Posterior cingulate gyrus (tissue), 11 donors: ENCODE measurements at regions of chr14 and their contacts with region 1.

Region 1: DNA sequence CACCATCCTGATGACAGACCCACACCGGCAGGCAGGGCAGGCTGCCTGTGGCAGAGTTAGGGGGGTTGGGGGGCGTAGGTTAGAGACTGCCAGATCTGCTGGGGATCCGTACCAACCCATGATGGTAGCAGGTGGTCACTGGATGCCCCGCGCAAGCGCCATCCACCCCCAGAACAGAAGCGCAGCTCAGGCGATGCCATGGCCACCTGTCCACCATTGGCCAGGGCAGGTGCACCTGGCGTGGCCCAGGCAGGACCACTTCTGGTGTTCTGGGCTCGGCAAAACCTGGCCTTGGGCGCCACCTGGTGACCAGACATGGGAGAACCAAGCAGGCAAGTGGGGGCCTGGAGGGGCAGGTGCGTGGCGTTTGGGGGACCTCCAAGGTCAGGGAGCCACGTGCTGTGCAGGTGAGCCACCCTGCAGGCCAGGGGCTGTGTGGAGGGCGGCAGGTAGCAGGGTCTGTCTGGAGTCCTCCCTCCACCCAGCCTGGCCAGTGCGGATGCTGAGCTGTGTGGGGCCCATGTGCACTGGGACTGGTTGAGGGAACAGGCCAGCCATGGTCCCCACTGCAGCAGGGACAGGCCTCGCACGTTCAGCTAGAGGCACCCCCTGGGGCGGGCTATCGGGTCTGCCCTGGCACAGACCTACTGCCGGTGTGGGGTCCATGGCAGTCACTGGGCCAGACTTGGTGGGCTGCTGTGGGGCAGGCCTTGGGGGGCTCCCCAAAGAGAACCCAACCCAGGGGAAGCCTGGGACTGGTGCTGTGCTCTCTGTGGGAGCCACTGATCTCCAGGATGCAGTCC is 15.6 kb downstream of the BAG5 start:
- DNase-seq: peak; percentile 77 to 97 (median 88)

Region 2: DNA sequence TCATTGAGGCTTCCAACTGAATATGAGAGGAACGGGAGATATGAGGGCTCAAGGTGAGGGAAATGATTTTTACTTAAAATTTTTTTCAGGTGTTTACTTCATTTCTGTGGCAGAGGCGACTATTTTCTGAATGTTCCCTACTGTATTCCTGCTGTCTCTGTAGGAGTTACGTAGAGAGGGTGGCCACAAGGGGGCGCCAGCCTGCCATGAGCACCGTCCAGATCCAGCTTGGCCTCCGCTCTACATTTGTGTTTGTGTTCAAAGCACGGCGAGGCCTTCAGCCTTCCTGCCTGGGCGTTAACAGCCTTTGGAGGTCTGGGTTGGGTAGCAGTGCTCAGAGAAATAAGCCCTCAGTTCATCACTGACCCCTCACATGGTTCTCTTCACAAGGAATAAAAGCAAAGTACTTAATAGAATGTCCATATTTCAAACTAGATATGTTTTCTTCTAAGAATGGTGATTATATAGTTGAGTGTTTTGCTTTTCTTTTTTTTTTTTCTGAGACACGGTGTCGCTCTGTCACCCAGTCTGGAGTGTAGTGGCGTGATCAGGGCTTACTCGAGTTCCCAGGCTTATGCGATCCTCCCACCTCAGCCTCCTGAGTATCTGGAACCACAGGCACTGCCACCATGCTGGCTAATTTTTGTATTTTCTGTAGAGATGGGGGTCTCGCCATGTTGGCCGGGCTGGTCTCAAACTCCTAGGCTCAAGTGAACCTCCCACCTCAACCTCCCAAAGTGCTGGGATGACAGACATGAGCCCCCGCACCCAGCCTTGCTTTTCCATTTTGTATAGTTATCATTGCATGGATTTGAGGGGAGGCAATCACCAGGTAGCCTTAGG is 46.5 kb before region 1 on chr14:
- intact Hi-C with region 1: loop called (anchors 1 kb)
- DNase-seq: peak; percentile 86 to 99 (median 96)

Region 3: DNA sequence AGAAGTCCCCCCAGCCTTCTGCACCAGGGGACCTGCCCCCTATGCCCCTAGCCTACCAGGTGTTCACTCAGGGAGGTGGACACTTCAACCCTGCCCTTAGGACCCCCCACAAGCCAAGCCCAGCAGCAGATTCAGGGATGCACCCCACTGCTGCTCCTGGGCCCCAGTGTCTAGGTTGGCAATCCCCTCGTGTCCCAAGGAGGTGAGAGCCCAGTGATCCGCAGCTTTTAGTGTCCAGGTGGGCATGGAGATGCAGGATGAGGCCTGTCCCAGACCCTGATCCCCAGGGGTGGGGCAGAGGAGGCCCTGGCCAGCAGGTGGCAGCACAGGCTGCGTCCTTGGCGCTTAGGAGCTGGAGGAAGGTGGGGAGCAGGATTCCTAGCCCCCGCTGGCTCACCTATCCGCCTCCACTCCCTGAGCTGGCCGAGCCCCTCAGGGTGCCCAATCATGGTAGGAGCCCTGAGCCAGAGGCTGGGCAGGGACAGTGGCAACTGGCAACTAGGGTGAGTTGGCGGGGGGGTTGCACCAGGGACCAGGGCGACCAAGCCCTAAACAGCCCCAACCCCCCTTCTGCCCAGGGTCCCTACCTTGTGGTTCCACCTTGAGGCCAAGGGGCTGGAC is 28.3 kb before region 1 on chr14:
- intact Hi-C with region 1: loop called (anchors 1 kb)
- DNase-seq: peak; percentile 58 to 97 (median 75)

Region 4: DNA sequence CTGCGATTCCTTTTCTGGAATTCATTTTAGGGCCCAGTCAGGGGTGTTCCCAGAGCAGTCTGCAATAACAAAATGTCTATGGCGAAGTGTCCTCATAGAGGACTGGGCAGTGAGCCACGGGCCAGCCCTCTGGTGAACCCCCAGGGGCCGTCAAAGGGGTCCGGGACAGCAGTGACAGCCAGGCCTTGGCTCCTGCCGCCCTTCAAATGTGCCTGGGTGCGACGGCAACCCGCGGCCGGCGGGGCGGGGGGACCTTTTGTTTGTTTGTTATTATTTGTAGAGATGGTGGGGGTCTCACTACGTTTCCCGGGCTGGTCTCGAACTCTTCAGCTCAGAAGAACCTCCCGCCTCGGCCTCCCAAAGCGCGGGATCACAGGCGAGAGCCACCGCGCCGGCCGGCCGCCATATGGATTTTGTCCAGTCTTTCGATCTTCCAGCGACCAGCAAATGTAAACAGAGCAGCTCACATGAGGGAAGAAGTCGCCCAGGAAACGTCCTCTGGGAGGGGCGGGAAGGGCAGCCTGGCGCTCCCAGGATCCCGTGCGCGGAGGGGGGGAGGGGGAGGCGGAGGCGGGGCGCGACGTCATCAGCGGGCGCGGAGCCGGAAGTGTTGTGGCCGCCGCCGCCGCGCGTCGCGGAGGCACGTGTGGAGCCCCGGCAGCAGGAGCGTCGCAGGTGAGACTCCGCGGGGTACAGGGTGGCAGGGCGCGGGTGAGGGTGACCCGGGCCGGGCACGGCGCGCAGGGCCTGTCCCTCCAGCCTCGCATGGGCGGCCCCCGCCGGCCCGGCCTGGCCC is 18.1 kb before region 1 on chr14 and contains the start of gene TRMT61A:
- intact Hi-C with region 1: loop called (anchors 2 kb)
- DNase-seq: peak; percentile 79 to 97 (median 84)